AG04450 (cell line): ENCODE measurements at regions of chr11 and their contacts with region 1.

Region 1: GRCh38 chr11:122101625-122102291 is 14.3 kb downstream of the BLID start:
- DNase-seq: peak; percentile 53
- H3K4me3 ChIP-seq: peak overlapping the region; percentile 79
- H3K27ac ChIP-seq: peak overlapping the region; percentile 86
- H3K27me3 ChIP-seq: no peaks in the 10 kb centered on the region
- CTCF ChIP-seq: peak; percentile 68

Region 2: GRCh38 chr11:121067453-121067852 is 1034.3 kb before region 1 on chr11:
- CTCF ChIA-PET with region 1: no interaction called
- POLR2A ChIA-PET with region 1: no interaction called
- DNase-seq: peak; percentile 20
- H3K4me3 ChIP-seq: no peak overlapping the region
- H3K27ac ChIP-seq: no peak overlapping the region
- H3K27me3 ChIP-seq: no peaks in the 10 kb centered on the region
- CTCF ChIP-seq: no peak

Region 3: DNA sequence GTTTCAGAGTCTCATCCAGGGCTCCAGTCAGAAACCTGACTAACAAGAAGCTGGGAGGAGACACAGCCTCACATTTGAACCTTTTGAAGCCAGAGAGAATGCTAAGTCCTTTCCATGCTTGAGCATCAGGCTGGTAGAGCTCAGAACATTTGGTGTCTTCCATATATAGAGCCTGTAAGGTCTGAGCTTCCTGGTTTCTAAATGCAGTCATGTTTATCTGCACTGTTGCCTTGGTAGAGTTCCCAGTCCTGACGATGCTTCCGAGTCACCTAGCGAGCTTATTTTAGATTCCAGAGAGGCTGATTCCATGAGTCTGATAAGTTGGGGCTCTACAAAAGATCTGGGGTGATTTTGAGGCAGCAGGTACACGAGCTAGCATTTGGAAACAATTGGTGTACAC is 718.0 kb before region 1 on chr11:
- CTCF ChIA-PET with region 1: interaction called, 12 read pairs
- POLR2A ChIA-PET with region 1: no interaction called
- DNase-seq: no peak
- H3K4me3 ChIP-seq: no peak overlapping the region
- H3K27ac ChIP-seq: no peak overlapping the region
- H3K27me3 ChIP-seq: peaks cover 4% of the 10 kb centered on the region
- CTCF ChIP-seq: no peak

Region 4: DNA sequence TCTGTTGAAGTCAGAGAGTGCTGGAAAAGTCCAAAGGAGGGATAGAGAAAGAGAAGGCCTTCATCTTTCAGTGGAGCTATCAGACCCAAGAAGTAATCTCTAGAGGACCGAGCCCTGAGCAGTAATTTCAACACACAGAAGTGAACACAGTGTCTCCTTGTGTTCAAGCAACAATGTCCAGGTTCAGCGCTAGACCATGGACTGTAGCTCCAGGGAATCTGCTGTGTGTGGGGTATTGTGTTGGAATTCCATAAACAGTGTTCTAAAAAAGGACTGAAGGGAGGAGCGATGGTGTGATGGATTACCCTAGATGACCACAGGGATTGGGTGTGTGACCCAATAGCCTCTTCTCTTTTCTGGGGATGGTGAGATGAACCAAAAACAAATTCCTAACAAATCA is 151.6 kb before region 1 on chr11:
- CTCF ChIA-PET with region 1: no interaction called
- POLR2A ChIA-PET with region 1: no interaction called
- DNase-seq: no peak
- H3K4me3 ChIP-seq: no peak overlapping the region
- H3K27ac ChIP-seq: no peak overlapping the region
- H3K27me3 ChIP-seq: no peaks in the 10 kb centered on the region
- CTCF ChIP-seq: no peak

Region 5: GRCh38 chr11:122115524-122116379 is 14.0 kb after region 1 on chr11 and contains the start of gene BLID:
- CTCF ChIA-PET with region 1: interaction called, 10 read pairs
- POLR2A ChIA-PET with region 1: no interaction called
- DNase-seq: no peak
- H3K4me3 ChIP-seq: no peak within 1 kb of the TSS
- H3K27ac ChIP-seq: peak within 1 kb of the TSS; percentile 33
- H3K27me3 ChIP-seq: no peaks in the 10 kb centered on the region
- CTCF ChIP-seq: peak; percentile 64
- polyA plus RNA-seq, gene BLID: 0.48 and 0.94 TPM in 2 replicates

Region 6: DNA sequence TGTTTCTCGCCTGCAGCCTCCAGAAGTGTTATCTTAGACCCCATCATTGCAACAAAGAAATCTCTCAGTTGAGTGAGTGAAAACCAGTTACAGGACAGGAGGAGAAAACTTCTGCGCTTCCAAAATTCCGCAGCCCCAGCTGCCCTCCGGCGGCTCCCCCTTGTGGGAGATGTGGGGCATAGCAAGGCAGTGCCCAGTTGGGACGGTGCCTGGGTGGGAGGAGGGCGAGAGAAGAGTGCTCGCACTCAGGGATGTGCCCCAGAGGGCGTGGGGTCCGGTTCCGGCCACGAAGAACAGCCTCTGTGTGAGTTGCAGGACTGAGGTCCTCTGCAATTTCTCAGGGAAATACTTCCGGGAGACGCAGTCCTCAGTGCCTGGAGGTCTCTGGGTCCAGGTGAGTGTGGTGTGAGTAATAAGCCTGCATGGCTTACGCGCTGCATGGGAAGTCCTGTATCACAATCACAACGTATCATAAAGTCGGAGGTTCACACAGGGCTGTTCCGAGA is 101.2 kb after region 1 on chr11:
- CTCF ChIA-PET with region 1: interaction called, 26 read pairs
- POLR2A ChIA-PET with region 1: no interaction called
- DNase-seq: peak; percentile 48
- H3K4me3 ChIP-seq: peak overlapping the region; percentile 70
- H3K27ac ChIP-seq: peak overlapping the region; percentile 79
- H3K27me3 ChIP-seq: no peaks in the 10 kb centered on the region
- CTCF ChIP-seq: peak; percentile 99